Activated CD4-positive, alpha-beta T cell treated with anti-CD3 and anti-CD28 coated beads for 36 hours (primary cell): ENCODE measurements at regions of chr12 and their contacts with region 1.

Region 1: GRCh38 chr12:102061560-102062418 is at the start of gene WASHC3:
- DNase-seq: peak; percentile 98
- ATAC-seq: peak; percentile 93
- H3K4me3 Mint-ChIP-seq: peak within 1 kb of the TSS; percentile 94
- H3K27ac Mint-ChIP-seq: peak within 1 kb of the TSS; percentile 99
- H3K4me1 Mint-ChIP-seq: peaks cover 29% of the 10 kb centered on the region
- H3K27me3 Mint-ChIP-seq: no peaks in the 10 kb centered on the region
- total RNA-seq, gene WASHC3: 36.1 to 64.4 TPM

Region 2: DNA sequence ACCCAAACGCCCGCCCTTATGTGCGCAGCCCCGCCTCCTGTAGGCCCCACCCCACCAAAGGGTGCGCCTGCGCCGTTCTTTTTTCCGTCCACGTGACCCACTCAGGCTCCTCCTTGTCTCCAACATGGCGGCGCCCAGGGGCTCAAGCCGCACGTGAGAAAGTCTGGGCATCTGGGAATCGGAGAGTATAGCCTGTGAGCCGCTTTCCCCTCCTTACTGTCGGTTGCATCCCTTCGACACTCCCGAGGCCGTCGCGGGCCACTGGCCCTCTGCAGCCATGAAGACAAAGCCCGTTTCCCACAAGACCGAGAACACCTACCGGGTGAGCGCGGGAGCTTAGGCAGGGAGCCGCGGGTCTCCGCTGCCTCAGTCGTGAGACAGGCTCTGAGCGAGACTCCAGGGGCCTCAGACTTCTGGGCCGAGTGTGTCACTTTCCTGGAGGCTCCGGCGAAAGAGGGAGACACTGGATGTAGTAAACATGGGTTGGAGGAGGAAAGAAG is 781.7 kb before region 1 on chr12 and contains the start of gene UTP20:
- CTCF ChIA-PET with region 1: no interaction called
- POLR2A ChIA-PET with region 1: no interaction called
- intact Hi-C with region 1: loop called in 1 of 2 experiments (anchors 5 kb)
- DNase-seq: peak; percentile 97
- ATAC-seq: peak; percentile 100
- H3K4me3 Mint-ChIP-seq: peak within 1 kb of the TSS; percentile 93
- H3K27ac Mint-ChIP-seq: peak within 1 kb of the TSS; percentile 85
- H3K4me1 Mint-ChIP-seq: peaks cover 17% of the 10 kb centered on the region
- H3K27me3 Mint-ChIP-seq: peaks cover 9% of the 10 kb centered on the region
- total RNA-seq, gene UTP20: 29.4 to 33.1 TPM

Region 3: GRCh38 chr12:101870925-101871324 is 190.9 kb before region 1 on chr12:
- CTCF ChIA-PET with region 1: no interaction called
- POLR2A ChIA-PET with region 1: no interaction called
- intact Hi-C with region 1: no loop called
- DNase-seq: no peak
- ATAC-seq: no peak
- H3K4me3 Mint-ChIP-seq: no peak overlapping the region
- H3K27ac Mint-ChIP-seq: no peak overlapping the region
- H3K4me1 Mint-ChIP-seq: peaks cover 2% of the 10 kb centered on the region
- H3K27me3 Mint-ChIP-seq: no peaks in the 10 kb centered on the region

Region 4: GRCh38 chr12:102119674-102120563 is 58.1 kb after region 1 on chr12 and contains the starts of genes NUP37 and PARPBP:
- CTCF ChIA-PET with region 1: no interaction called
- POLR2A ChIA-PET with region 1: interaction called, 4 read pairs
- intact Hi-C with region 1: loop called (anchors 1 kb)
- DNase-seq: peak; percentile 96
- ATAC-seq: peak; percentile 93
- H3K4me3 Mint-ChIP-seq: peak within 1 kb of the TSS; percentile 95
- H3K27ac Mint-ChIP-seq: peak within 1 kb of the TSS; percentile 95
- H3K4me1 Mint-ChIP-seq: peaks cover 19% of the 10 kb centered on the region
- H3K27me3 Mint-ChIP-seq: no peaks in the 10 kb centered on the region
- total RNA-seq, gene NUP37: 100 to 108 TPM
- total RNA-seq, gene PARPBP: 21.7 to 26.4 TPM